Naive thymus-derived CD8-positive, alpha-beta T cell (primary cell): ENCODE measurements at regions of chr1 and their contacts with region 1.

Region 1: DNA sequence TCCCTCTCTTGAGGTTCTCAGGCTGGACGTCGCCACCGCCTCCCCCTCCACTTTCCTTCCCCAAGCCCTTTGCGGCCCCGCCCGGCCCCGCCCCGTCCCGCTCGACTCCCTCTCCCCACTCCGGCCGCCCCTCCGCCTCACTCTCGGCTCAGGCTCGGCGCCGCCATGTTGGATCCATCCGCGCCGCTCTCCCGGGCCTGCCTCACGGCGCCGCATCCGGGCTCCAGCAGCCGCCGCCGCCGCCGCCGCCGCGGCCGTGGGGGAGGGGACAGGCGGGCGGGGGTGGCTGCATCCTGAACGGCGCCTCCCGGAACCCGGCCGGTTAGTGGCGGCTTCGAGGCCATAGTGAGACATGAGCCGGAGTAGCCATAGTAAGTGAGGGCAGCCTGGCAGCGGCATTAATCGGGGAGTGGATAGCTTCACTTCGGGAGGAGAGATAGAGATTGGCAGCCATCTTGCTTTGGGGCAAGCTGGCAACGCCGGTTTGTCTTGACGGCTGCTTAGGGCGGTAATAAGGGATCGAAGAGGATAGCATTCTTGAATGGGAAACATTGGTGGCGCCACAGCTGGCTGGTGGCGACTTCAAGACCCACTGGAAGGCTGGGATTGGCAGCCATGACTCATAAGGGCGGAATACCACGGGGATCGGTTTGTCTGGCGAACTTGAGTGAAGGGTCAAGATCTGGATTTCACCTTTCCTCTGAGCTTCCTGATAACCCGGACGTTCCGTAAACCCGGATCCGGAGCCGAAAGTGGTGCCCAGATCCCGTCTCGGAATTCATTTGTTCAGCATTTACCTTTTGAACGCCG is at the start of gene DEDD:
- DNase-seq: peak; percentile 74 to 95 (median 88)
- ATAC-seq: peak; percentile 95
- H3K4me3 Mint-ChIP-seq: no peak within 1 kb of the TSS
- H3K27ac Mint-ChIP-seq: peak within 1 kb of the TSS in 2 of 10 donors; percentile 92 to 96
- H3K4me1 Mint-ChIP-seq: peaks cover 33 to 62% (median 55%) of the 10 kb centered on the region in 4 donors
- H3K27me3 Mint-ChIP-seq: no peaks in the 10 kb centered on the region
- polyA plus RNA-seq, gene DEDD: 29.0 to 35.4 (median 29.3) TPM

Region 2: GRCh38 chr1:161117759-161118581 is 14.6 kb before region 1 on chr1 and contains the starts of genes NIT1 and PFDN2:
- POLR2A ChIA-PET with region 1: interaction called, 12 read pairs
- DNase-seq: peak; percentile 76 to 88 (median 83)
- ATAC-seq: peak; percentile 82 to 86
- H3K4me3 Mint-ChIP-seq: peak within 1 kb of the TSS; percentile 91 to 97 (median 95)
- H3K27ac Mint-ChIP-seq: peak within 1 kb of the TSS; percentile 77 to 98 (median 95)
- H3K4me1 Mint-ChIP-seq: peaks cover 36 to 90% (median 68%) of the 10 kb centered on the region in 4 donors
- H3K27me3 Mint-ChIP-seq: no peaks in the 10 kb centered on the region
- polyA plus RNA-seq, gene NIT1: 16.8 to 25.0 (median 18.3) TPM
- polyA plus RNA-seq, gene PFDN2: 74.6 to 91.3 (median 86.0) TPM

Region 3: DNA sequence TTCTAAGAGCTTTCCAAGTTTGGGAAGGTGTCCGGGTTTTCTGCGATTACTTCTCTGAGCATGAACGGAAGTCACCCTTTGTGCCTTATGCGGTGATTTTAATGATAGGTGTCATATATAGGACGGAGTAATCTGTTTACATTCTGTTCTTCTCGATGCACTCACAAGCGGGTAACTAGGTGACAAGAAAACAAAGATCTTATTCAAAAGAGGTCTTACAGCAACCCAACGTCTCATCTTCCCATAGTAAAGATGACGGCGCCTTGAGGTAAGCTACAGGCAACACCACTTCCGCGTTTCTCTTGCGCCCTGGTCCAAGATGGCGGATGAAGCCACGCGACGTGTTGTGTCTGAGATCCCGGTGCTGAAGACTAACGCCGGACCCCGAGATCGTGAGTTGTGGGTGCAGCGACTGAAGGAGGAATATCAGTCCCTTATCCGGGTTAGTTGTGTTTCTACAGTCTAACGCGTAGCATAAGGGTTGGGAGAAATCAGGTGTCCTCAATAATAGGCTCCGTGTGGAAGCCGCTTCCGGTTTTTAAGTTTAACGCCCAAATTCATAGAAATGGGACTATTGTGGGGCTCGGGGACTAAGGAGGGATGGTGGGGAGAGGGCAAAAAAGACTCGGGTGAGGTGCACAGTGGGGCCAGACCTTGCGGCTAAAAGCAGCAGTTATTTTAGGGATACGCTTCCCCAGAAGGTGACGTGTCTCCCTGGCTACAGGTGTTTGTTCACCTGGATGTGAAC is 21.2 kb after region 1 on chr1 and contains the start of gene UFC1:
- POLR2A ChIA-PET with region 1: interaction called, 26 read pairs
- DNase-seq: peak; percentile 65 to 93 (median 84)
- ATAC-seq: peak; percentile 91 to 94
- H3K4me3 Mint-ChIP-seq: peak within 1 kb of the TSS; percentile 91 to 100 (median 98)
- H3K27ac Mint-ChIP-seq: peak within 1 kb of the TSS; percentile 99 to 100 (median 100)
- H3K4me1 Mint-ChIP-seq: peaks cover 15 to 39% (median 31%) of the 10 kb centered on the region in 4 donors
- H3K27me3 Mint-ChIP-seq: peaks cover 0 to 1% (median 0%) of the 10 kb centered on the region in 5 donors
- polyA plus RNA-seq, gene UFC1: 148 to 158 (median 155) TPM